PC-3 (cell line): ENCODE measurements at regions of chr1 and their contacts with region 1.

Region 1: GRCh38 chr1:43529206-43529731 is 1.4 kb upstream of the PTPRF start:
- DNase-seq: peak; percentile 91
- ATAC-seq: peak; percentile 60
- H3K4me3 ChIP-seq: no peak overlapping the region
- H3K27ac ChIP-seq: no peak overlapping the region
- H3K4me1 ChIP-seq: peaks cover 49% of the 10 kb centered on the region
- H3K27me3 ChIP-seq: no peaks in the 10 kb centered on the region
- CTCF ChIP-seq: peak; percentile 97

Region 2: DNA sequence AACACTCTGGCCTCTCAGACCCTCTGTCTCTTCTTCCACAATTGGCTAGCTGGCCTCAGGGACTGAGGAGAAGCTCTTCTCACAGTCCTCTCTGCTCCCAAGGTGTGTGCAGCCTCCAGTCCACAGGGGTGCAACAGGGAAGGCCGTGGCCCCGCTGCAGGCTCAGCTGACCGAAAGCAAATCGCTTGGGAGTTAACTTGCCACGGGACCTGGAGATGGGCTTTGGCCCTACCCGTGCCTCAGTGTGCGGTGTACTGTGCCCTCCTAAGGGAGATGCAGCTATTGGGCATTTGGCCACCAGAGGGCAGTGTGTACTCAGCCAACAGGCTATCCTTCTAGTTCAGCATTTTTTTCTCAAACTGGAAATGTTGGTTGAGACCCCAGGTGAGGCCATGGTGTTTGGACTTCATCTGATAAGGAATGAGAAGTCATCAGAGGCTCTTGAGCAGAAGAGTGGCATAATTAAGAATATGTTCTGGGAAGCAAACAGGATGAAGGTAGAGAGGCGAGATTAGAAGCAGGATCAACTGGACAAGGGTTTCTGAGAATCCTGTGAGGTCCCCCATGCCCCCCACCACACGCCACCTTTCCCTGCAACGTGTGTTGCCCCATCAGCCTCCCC is 302.0 kb before region 1 on chr1:
- CTCF ChIA-PET with region 1: no interaction called
- POLR2A ChIA-PET with region 1: no interaction called
- intact Hi-C with region 1: loop called (anchors 5 kb)
- DNase-seq: peak; percentile 89
- ATAC-seq: peak; percentile 94
- H3K4me3 ChIP-seq: no peak overlapping the region
- H3K27ac ChIP-seq: no peak overlapping the region
- H3K4me1 ChIP-seq: peaks cover 6% of the 10 kb centered on the region
- H3K27me3 ChIP-seq: no peaks in the 10 kb centered on the region
- CTCF ChIP-seq: peak; percentile 96

Region 3: GRCh38 chr1:43329995-43330751 is 199.1 kb before region 1 on chr1:
- CTCF ChIA-PET with region 1: no interaction called
- POLR2A ChIA-PET with region 1: no interaction called
- intact Hi-C with region 1: no loop called
- DNase-seq: peak; percentile 57
- ATAC-seq: peak; percentile 40
- H3K4me3 ChIP-seq: no peak overlapping the region
- H3K27ac ChIP-seq: no peak overlapping the region
- H3K4me1 ChIP-seq: peaks cover 8% of the 10 kb centered on the region
- H3K27me3 ChIP-seq: no peaks in the 10 kb centered on the region
- CTCF ChIP-seq: no peak

Region 4: DNA sequence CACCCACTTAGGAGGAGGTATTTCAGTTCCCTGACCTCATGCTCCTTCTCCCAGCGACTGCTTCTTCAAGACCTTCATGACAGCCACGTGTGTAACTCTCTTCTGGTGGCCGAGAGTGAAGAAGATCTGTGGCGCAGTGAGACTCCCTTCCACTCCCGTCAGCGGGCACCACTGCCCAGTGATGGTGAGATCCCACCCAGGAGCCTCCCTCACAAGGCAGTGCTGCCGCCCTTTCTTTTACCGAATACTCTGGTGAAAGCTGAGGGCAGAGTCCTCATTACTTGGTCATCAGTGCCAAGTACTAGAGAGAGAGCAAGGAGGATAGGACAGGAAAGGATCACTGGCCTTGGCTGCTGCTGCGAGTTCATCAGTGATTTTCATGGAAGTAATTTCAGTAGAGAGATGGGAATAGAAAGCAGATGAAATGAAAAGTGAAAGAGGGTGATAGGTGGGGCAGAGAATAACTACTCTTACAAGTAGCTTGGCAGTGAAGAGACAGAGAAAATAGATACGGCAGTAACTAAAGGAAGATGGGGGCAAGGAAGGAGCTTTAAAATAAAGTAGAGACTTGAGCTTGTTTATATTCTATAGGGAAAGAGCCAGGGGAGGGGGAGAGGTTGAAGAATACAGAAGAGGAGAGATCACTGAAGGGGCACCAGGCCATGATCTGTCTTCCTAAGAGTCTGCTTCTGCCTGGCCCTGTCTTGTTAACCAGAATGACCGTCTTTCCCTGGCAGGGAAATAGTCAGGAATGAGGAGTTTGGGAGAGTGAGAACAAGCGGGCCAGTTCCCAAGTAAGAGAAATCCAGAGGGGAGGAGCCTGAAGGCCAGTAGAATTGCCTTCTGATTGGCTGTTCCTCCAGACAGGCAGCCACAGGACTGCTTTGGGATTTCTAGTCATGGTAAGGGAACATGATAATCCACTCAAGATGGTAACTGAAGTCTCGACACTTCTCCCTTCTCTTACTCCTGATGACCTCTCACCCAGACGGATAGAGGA is 93.8 kb before region 1 on chr1:
- CTCF ChIA-PET with region 1: no interaction called
- POLR2A ChIA-PET with region 1: no interaction called
- intact Hi-C with region 1: no loop called
- DNase-seq: no peak
- ATAC-seq: no peak
- H3K4me3 ChIP-seq: no peak overlapping the region
- H3K27ac ChIP-seq: no peak overlapping the region
- H3K4me1 ChIP-seq: no peaks in the 10 kb centered on the region
- H3K27me3 ChIP-seq: no peaks in the 10 kb centered on the region
- CTCF ChIP-seq: no peak

Region 5: GRCh38 chr1:43582162-43582589 is 52.9 kb after region 1 on chr1:
- CTCF ChIA-PET with region 1: no interaction called
- POLR2A ChIA-PET with region 1: no interaction called
- intact Hi-C with region 1: loop called (anchors 1 kb)
- DNase-seq: peak; percentile 96
- ATAC-seq: peak; percentile 100
- H3K4me3 ChIP-seq: no peak overlapping the region
- H3K27ac ChIP-seq: peak overlapping the region; percentile 73
- H3K4me1 ChIP-seq: peaks cover 14% of the 10 kb centered on the region
- H3K27me3 ChIP-seq: no peaks in the 10 kb centered on the region
- CTCF ChIP-seq: no peak

Region 6: DNA sequence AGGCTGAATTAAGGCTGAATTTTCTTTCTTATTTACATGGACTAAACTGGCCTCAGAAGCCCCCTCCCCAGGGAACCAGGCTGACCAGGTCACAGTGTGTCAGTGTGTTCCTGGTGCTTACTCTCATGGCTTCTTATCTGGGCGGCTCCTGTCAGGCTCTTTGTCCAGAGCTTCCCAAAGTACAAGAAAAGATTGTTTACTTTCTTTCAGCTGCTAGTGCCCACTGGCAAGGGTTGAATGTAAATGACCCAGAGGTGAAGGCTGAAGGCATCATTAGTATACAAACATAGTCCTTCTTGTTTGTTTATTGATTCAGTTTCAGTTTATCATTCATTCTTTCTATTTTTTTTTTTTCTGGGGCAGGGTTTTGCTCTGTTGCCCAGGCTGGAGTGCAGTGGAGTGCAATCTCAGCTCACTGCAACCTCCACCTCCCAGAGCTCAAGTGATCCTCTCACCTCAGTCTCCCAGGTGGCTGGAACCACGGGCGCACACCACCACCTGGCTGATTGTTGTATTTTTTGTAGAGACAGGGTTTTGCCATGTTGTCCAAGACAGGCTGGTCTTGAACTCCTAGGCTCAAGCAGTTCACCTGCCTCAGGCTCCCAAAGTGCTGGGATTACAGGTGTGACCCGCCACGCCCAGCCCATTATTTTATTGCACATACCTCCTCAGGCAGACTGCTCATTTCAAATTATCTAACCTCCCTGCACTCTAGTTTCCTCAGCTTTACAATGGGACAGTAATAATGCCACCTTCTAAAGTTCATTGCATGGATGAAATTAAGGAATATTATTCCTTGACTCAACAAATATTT is 110.9 kb after region 1 on chr1:
- CTCF ChIA-PET with region 1: no interaction called
- POLR2A ChIA-PET with region 1: no interaction called
- intact Hi-C with region 1: loop called (anchors 1 kb)
- DNase-seq: peak; percentile 38
- ATAC-seq: no peak
- H3K4me3 ChIP-seq: no peak overlapping the region
- H3K27ac ChIP-seq: no peak overlapping the region
- H3K4me1 ChIP-seq: peaks cover 19% of the 10 kb centered on the region
- H3K27me3 ChIP-seq: no peaks in the 10 kb centered on the region
- CTCF ChIP-seq: no peak; the same call in 1 of the 2 replicates

Region 7: GRCh38 chr1:43650310-43651085 is 121.2 kb after region 1 on chr1:
- CTCF ChIA-PET with region 1: interaction called, 4 read pairs
- POLR2A ChIA-PET with region 1: interaction called, 4 read pairs
- intact Hi-C with region 1: loop called (anchors 2 kb)
- DNase-seq: peak; percentile 98
- ATAC-seq: peak; percentile 76
- H3K4me3 ChIP-seq: peak overlapping the region; percentile 93
- H3K27ac ChIP-seq: peak overlapping the region; percentile 62
- H3K4me1 ChIP-seq: peaks cover 13% of the 10 kb centered on the region
- H3K27me3 ChIP-seq: no peaks in the 10 kb centered on the region
- CTCF ChIP-seq: no peak

Region 8: DNA sequence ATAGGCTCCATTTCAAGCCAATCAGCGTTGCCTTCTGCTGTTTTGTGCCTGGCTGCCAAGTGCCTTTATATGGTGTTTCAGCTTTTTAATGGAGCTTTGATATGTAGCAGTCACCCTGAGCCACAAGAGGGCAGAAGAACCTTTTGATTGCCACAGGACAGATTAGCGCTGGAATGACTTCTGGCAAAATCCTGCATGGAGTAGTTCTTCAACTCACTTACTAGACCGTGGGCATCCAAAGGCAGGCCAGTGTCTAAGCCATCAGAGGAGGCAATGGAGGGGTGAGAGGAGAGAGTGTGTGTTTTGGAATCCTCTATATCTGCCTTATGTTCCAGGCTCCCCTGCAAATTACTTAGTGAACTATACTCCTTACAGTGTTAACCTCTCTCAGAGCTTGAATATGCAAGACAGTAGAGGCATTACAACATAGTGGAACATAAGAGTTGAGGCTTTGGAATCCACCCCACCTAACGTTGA is 234.3 kb after region 1 on chr1:
- CTCF ChIA-PET with region 1: no interaction called
- POLR2A ChIA-PET with region 1: no interaction called
- intact Hi-C with region 1: loop called (anchors 1 kb)
- DNase-seq: peak; percentile 93
- ATAC-seq: peak; percentile 99
- H3K4me3 ChIP-seq: no peak overlapping the region
- H3K27ac ChIP-seq: no peak overlapping the region
- H3K4me1 ChIP-seq: peaks cover 8% of the 10 kb centered on the region; the same call in 1 of the 2 replicates
- H3K27me3 ChIP-seq: no peaks in the 10 kb centered on the region
- CTCF ChIP-seq: peak; percentile 95

Region 9: DNA sequence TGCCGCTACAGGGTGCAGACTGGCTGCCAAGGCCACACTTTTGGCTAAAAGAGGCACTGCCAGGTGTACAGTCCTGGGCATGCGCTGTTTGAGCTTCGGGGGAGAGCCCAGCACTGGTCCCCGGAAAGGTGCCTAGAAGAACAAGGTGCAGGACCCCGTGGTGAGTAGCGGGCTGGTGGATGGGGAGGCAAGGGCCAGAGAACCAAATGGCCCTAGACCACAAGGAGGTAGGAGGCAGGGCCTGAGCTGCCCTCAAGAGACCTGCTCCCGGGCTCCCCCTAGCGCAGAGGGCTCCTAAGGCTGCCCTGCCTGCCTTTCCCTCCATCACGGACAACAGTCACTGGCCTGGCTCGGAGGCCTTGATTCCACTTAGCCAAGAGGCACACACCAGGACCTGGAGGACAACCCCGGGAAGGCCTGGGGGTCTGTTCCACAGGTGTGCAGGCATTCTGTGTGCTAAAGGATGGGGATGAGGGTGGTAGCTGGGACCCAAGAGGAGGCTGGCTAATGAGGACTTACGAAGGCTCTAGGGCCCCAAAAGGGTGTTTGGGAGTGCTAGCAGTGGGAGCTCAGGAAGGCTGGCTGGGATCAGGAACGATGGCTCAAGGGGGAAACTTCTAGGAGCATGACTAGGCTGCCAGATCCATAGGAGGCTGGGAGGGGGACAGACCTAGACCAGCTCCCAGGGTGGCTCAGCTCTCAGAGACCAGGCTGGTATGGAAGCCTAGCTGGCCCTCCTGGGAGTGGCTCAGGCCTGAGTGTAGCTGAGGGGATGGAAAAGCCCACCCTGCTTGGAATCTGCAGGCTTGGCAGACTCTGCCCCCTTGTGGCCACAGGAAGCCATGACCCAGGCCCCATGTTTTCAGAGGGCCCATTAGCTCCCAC is 405.1 kb after region 1 on chr1:
- CTCF ChIA-PET with region 1: no interaction called
- POLR2A ChIA-PET with region 1: no interaction called
- intact Hi-C with region 1: loop called (anchors 2 kb)
- DNase-seq: peak; percentile 75
- ATAC-seq: peak; percentile 53
- H3K4me3 ChIP-seq: peak overlapping the region; percentile 68
- H3K27ac ChIP-seq: peak overlapping the region; percentile 55
- H3K4me1 ChIP-seq: peaks cover 56% of the 10 kb centered on the region
- H3K27me3 ChIP-seq: no peaks in the 10 kb centered on the region
- CTCF ChIP-seq: peak; percentile 67